ENCODE measurements at regions of chr6 and their contacts with region 1.

Region 1: DNA sequence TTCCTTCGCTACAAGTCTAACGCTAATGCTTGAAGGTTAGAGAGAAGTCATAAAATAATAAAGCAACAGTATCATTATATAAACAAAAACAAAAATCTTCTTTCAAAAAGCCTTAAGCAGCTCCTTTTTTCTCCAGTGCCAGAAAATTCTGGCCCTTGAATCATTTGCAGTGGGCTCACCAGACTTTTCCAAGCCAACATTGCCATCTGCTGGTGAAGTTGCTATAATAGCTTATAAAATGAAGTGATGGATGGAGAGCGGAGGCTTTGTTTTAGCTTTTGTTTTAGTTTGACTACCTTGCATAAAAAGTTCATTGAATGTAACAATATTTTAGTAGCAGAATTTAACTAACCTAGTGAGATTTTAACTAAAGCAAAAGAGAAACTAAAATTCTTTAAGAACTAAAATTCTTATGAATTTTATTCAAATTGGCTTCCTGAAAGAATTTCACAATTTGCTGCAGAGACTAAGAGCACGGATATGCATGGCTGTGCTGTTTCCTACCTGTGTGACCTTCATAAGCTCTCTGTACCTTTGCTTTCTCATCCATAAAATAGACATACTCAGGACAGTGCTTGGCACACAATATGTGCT is 44.8 kb upstream of the SLC2A12 start:
- DNase-seq: peak; percentile 79
- ATAC-seq: peak; percentile 68
- H3K4me3 Mint-ChIP-seq: no peak overlapping the region
- H3K27ac Mint-ChIP-seq: no peak overlapping the region
- H3K4me1 Mint-ChIP-seq: peaks cover 6% of the 10 kb centered on the region
- H3K27me3 Mint-ChIP-seq: peaks cover 23% of the 10 kb centered on the region

Region 2: DNA sequence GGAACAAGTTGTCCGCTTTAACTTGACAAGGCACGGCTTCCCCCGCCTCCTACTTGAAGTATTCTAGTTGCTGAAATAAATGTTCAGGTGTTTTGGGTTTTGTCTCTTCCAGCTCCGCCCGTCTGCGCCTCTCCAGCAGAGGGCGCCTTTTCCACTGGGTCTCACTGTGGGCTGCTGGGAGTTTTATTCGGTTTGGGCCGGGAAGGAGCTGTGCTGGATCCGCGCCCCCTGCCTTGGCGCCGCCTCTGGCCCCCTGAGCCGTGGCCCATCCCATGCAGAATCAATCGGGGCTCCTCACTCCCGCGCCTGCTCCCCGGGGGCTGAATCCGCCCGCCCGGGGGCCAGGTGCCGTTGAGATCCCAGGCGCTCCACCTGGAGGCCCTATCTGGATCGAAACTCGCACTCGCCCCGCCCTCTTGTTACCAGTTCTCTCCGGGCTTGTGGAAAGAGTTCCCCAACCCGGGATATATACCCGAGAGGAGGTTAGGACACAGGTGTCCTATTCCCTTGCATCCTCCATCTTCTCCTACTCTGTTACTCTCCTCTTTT is 259.3 kb before region 1 on chr6:
- CTCF ChIA-PET with region 1: interaction called, 16 read pairs
- POLR2A ChIA-PET with region 1: no interaction called
- DNase-seq: peak; percentile 71
- ATAC-seq: peak; percentile 92
- H3K4me3 Mint-ChIP-seq: peak overlapping the region; percentile 72
- H3K27ac Mint-ChIP-seq: no peak overlapping the region
- H3K4me1 Mint-ChIP-seq: peaks cover 3% of the 10 kb centered on the region
- H3K27me3 Mint-ChIP-seq: peaks cover 14% of the 10 kb centered on the region

Region 3: DNA sequence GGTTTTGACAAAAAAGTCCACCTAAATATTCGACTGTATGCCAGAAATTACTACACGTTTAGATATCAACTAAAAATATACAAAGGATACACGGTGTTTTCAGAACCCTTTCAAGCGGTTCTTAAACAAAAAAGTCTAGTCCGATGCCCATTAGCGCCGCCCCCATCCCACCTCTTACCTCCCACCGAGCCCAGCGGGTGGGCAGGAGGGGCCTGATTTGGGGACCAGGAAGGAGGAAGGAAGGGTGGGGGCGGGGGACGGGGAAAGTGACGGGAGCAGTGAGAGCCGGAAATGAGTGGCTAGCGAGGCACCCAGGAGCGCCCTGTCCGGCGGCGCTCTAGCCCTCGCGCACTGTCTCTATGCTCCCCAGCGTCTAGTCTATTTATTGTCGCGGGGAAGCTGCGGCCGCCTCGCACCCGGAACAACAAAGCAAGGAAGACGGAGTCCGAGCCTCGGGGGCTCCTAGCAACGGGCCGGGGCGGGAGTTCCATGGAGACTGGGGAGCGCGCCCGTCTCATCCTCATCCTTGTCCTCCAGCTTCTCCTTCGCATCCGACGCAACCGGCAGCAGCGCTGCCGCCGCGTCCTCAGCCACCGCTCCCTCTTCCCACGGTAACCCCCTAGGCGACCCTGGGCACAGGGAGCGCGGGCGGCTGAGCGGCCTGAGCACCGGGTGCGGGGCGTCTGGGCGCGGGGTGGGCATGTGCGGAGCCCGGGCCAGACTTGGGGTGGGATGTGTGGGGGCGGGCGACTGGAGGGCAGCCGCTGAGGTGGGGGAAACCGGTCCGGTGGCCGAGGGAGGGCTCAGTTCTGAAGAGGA is 144.2 kb before region 1 on chr6 and contains the start of gene TBPL1:
- CTCF ChIA-PET with region 1: interaction called, 23 read pairs
- POLR2A ChIA-PET with region 1: no interaction called
- DNase-seq: peak; percentile 92
- ATAC-seq: peak; percentile 94
- H3K4me3 Mint-ChIP-seq: peak within 1 kb of the TSS; percentile 95
- H3K27ac Mint-ChIP-seq: peak within 1 kb of the TSS; percentile 85
- H3K4me1 Mint-ChIP-seq: peaks cover 41% of the 10 kb centered on the region
- H3K27me3 Mint-ChIP-seq: peaks cover 10% of the 10 kb centered on the region
- total RNA-seq, gene TBPL1: 29.1 to 35.2 TPM

Region 4: GRCh38 chr6:133983099-133983939 is 113.9 kb before region 1 on chr6:
- CTCF ChIA-PET with region 1: interaction called, 14 read pairs
- POLR2A ChIA-PET with region 1: no interaction called
- DNase-seq: peak; percentile 69
- ATAC-seq: peak; percentile 92
- H3K4me3 Mint-ChIP-seq: peak overlapping the region; percentile 35
- H3K27ac Mint-ChIP-seq: peak overlapping the region; percentile 66
- H3K4me1 Mint-ChIP-seq: peaks cover 50% of the 10 kb centered on the region
- H3K27me3 Mint-ChIP-seq: no peaks in the 10 kb centered on the region

Region 5: GRCh38 chr6:134058622-134059366 is 38.4 kb before region 1 on chr6:
- CTCF ChIA-PET with region 1: interaction called, 60 read pairs
- POLR2A ChIA-PET with region 1: no interaction called
- DNase-seq: no peak
- ATAC-seq: no peak
- H3K4me3 Mint-ChIP-seq: no peak overlapping the region
- H3K27ac Mint-ChIP-seq: no peak overlapping the region
- H3K4me1 Mint-ChIP-seq: no peaks in the 10 kb centered on the region
- H3K27me3 Mint-ChIP-seq: peaks cover 5% of the 10 kb centered on the region